Heart right ventricle (tissue), 16 donors: ENCODE measurements at regions of chr1 and their contacts with region 1.

Region 1: DNA sequence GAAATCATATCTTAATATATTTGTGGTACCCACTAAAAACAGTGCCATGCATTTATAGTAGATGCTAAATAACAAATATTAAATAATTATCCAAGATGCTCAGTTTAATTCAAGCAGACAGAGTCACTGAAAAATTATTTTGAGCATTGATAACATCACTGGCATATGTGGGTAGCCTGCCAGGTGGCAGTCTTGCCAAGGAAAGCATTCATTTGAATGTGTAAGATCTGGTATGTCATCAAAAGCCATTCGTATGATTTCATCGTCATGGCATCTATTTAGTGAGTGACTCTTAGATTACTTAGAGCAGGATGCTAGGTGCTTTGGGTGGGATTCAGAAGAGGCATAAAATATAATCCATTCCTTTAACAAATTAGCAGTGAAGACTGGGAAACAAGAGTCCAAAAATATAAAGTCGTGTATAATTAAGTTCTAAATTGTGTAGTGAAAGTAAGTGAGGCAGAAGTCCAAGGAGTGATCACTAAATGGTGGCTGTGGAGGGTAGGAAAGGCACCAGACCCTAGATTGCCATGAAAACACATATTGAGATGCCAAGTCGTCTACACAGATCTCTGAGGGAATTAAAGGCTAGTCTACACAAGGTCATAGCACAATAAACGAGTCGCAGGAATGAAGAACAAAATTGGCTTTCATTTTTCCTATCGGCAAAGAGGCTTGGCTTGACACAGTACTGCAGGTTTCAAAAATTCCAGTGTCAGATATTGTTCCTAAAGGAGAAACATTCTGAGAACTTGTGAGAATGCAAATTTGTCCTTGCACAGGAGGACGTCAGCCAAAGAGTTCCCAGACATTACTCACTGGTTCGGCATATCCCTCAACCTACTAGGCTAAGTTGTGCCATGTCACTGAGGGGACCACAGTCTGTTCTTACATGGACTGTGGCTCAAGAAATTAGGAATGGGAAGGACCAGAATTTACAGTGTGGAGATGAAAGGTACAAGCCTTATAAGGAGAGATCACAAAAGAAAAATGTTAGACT is 130.8 kb downstream of the LYPLAL1 start:
- DNase-seq: peak in 1 of 2 donors; percentile 33
- ATAC-seq: peak; percentile 46 to 91 (median 80)
- H3K4me3 ChIP-seq: peak overlapping the region in 5 of 10 donors; percentile 16 to 29 (median 21)
- H3K27ac ChIP-seq: peak overlapping the region in 7 of 10 donors; percentile 29 to 90 (median 81)
- H3K4me1 ChIP-seq: peaks cover 0 to 25% (median 6%) of the 10 kb centered on the region in 9 donors
- H3K27me3 ChIP-seq: no peaks in the 10 kb centered on the region
- CTCF ChIP-seq: peak in 2 of 9 donors; percentile 11 to 15

Region 2: GRCh38 chr1:219120624-219121544 is 183.6 kb before region 1 on chr1:
- intact Hi-C with region 1: no loop called
- DNase-seq: peak in 1 of 2 donors; percentile 71
- ATAC-seq: peak in 7 of 8 donors; percentile 79 to 91 (median 87)
- H3K4me3 ChIP-seq: no peak overlapping the region
- H3K27ac ChIP-seq: peak overlapping the region in 6 of 10 donors; percentile 1 to 51 (median 25)
- H3K4me1 ChIP-seq: peaks cover 0 to 34% (median 14%) of the 10 kb centered on the region in 9 donors
- H3K27me3 ChIP-seq: no peaks in the 10 kb centered on the region
- CTCF ChIP-seq: no peak

Region 3: DNA sequence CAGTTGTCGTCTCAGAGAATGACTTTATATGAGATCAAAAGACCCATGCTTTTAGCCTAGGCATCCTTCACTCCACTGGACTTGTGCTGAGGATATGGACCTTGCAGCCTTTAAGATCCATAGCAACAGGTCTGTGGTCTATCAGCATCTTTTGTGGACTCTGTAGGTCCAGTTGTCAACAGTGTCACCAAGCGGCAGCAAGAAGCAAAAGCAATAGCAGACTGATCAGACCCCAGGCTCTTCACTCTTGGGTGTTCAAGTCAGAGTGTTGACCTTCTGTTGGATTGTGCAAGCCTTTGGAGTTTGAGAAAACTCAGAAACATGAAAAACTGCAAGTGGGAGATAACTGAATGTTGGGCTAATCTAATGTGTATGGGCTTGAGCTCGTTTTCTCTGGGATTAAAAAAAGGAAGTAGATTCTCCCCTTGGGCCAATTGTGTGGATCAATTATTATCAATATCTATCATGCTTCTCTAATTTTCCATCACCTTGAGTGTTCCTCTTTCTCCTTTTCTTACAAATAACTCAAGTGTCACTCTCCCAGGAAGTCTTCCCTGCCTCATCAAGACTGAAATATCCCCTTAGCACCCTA is 13.3 kb after region 1 on chr1:
- intact Hi-C with region 1: loop called in 1 of 10 experiments (anchors 1 kb)
- DNase-seq: no peak
- ATAC-seq: no peak
- H3K4me3 ChIP-seq: no peak overlapping the region
- H3K27ac ChIP-seq: no peak overlapping the region
- H3K4me1 ChIP-seq: peaks cover 0 to 7% (median 0%) of the 10 kb centered on the region in 9 donors
- H3K27me3 ChIP-seq: no peaks in the 10 kb centered on the region
- CTCF ChIP-seq: peak in 1 of 9 donors; percentile 7

Region 4: DNA sequence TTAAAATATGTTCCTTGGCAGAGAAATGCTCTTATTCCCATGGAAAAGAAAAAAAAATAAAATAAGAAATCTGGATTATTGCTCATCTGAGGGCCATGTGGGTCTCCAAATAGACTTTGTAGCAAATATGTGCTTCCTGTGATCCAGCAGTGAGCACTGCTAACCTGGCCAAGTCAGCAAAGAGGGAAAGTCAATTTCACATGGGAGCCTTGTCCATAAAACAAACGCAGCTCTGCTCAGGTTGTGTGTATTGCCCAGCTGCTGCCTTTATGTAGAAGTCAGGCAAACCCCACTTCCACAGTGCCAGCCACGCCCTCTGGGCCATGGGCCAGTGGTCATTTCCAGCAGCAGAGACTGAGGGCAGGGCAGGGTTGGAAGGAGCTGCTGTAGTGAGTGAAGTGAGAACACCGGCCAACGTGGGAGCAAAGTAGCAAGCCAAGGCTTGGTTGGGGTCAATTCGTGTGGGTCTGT is 43.4 kb after region 1 on chr1:
- intact Hi-C with region 1: no loop called
- DNase-seq: peak; percentile 42 to 68
- ATAC-seq: peak; percentile 54 to 82 (median 74)
- H3K4me3 ChIP-seq: no peak overlapping the region
- H3K27ac ChIP-seq: peak overlapping the region in 5 of 10 donors; percentile 20 to 66 (median 34)
- H3K4me1 ChIP-seq: peaks cover 0 to 27% (median 15%) of the 10 kb centered on the region in 9 donors
- H3K27me3 ChIP-seq: no peaks in the 10 kb centered on the region
- CTCF ChIP-seq: no peak

Region 5: DNA sequence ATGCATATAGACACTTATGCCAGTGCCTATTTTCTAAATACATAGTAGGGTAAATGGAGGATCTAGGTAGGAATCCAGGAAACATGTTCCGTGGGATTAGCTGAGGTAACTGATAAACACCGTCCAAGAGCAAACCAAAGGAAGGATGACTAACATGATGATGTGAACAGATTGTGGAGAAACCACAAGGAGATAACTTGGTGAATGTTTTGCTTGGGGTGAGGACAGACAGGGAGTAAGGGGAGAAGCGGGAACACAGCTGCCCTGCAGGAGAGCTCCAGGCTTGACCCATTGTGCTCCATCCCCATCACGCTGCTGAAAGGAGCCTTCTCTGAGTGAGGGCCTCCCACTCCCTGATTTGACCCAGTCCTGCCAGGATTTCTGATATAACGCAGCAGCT is 395.3 kb after region 1 on chr1:
- intact Hi-C with region 1: no loop called
- DNase-seq: no peak
- ATAC-seq: peak in 6 of 8 donors; percentile 45 to 73 (median 50)
- H3K4me3 ChIP-seq: no peak overlapping the region
- H3K27ac ChIP-seq: no peak overlapping the region
- H3K4me1 ChIP-seq: peaks cover 0 to 14% (median 0%) of the 10 kb centered on the region in 9 donors
- H3K27me3 ChIP-seq: no peaks in the 10 kb centered on the region
- CTCF ChIP-seq: no peak